GM13976 (cell line): ENCODE measurements at regions of chr10 and their contacts with region 1.

Region 1: GRCh38 chr10:47384148-47384921 is at the start of gene ZNF488:
- DNase-seq: peak; percentile 95
- CTCF ChIP-seq: no peak

Region 2: DNA sequence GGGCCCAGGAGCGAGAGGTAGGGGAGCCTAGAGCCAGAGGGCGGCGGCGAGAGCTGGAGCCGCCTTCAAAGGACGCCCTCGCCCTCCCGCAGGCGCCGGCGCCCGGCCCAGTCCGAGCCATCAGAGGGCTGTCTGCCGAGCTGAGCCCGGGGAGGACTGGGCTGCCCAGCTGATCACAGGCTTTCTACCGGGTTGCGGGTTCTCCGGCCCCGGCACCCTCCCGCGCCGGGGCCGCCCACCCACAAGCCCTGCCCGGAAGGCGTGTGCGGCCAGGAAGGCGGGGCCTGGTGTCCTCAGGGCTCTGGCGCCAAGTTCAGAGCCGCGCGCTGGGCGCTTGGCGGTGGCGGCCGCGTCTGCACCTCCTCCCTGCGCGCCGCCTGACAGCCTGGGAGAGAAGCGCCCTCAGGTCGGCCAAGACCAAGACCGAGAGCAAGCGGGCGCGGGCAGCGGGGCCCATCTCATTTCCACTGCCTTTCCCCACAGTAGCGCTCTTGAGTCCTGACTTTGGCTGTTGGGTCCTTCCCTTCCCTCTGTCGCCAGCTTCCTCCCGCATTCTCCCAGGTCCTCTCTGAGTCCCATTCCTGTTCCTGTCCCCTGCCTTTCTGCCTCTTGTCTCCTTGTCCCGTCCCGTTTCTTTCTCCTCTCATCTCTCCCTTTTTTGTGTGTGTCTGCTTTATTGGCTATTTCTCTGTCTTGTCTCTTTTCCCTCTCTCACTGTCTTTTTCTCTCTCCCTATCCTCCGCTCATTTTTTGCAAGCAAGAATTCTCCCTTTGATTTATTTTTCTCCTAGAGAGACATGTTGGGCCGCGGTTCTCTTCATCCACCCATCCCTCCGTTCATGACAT is 1277.7 kb before region 1 on chr10:
- in situ Hi-C with region 1: loop called (anchors 5 kb)
- DNase-seq: peak; percentile 54
- CTCF ChIP-seq: no peak

Region 3: DNA sequence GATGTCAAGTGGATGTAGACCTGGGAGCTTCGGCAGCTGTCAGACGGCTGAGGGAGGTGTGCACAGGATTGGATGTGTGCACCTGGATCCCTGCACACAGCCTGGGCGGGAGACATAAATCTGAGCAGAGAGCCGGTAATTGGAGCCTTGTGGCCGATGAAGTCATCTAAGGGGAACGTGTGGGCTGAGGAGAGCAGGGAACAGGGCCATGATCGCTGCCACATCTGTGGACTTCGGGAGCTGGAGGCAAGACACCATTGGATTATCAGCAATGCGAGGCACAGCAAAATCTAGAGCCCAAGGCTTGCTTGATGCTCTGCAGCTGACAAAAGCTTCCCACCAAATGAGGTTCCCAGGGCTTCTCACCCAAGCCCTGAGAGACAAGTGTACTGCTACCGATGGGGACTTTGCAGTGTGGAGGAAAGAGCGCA is 325.4 kb before region 1 on chr10:
- in situ Hi-C with region 1: no loop called
- DNase-seq: no peak
- CTCF ChIP-seq: no peak